ENCODE measurements at regions of chr5 and their contacts with region 1.

Region 1: GRCh38 chr5:611721-612486 is at the start of gene CEP72:
- DNase-seq: peak; percentile 93 to 99 (median 98)
- ATAC-seq: peak; percentile 93
- H3K4me3 ChIP-seq: peak within 1 kb of the TSS; percentile 87
- H3K27ac ChIP-seq: peak within 1 kb of the TSS; percentile 76
- H3K4me1 ChIP-seq: peaks cover 14 to 36% of the 10 kb centered on the region in 2 experiments
- H3K27me3 ChIP-seq: peaks cover 11 to 23% of the 10 kb centered on the region in 2 experiments; a peak in 4 of 5 replicates
- CTCF ChIP-seq: no peak
- EP300 ChIP-seq: no peak
- POLR2A ChIP-seq: peak; percentile 58; the same call in 1 of the 2 replicates
- RAD21 ChIP-seq: no peak
- polyA plus RNA-seq, gene CEP72: 0.89 to 1.4 TPM

Region 2: DNA sequence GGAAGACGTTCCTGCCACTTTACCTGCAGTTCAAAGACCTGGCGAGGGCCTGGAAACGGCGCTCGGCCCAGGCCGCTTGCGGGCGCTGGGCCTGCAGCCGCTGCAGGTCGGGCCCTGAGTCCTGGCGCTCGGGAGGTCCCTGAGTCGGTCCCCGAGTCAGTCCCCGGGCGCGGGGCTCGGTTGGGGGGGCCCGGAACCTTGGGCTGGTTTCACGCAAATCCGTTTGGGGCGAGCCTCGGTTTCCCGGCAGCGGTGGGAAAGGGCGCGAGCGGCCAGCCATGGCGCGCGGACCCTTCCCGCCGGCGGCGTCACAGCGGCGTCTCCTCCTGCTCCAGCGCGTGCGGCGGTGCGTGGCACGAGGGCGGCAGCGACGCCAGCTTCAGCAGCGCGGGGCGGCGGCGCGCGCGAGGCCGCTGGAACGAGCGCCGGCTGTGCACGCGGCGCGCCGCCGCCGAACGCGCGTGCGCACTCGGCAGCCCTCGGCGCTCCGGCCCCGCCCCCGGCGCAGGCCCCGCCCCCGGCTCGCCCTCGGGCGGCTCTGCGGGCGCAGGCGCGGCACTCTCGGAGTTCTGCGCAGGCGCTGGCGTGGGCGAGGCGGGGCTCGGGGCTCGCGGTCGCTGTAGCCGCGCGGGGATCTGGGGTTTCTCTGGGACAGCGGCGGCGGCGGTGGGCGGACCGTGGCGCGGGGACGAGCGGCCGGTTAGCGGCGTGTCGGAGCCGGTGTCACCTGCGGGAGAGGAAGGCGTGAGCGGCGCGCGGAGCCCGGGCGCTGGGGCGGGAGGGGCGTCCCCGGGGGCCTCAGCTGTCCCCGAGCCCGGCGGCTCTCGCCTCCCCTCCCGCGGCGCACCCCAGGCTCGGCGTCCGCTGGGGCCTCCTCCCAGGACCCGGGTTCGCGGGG is 139.0 kb before region 1 on chr5:
- CTCF ChIA-PET with region 1: no interaction called
- POLR2A ChIA-PET with region 1: interaction called, 4 read pairs
- in situ Hi-C with region 1: no loop called
- intact Hi-C with region 1: loop called (anchors 10 kb)
- DNase-seq: peak; percentile 91 to 100 (median 100)
- ATAC-seq: peak; percentile 84
- H3K4me3 ChIP-seq: peak overlapping the region; percentile 89
- H3K27ac ChIP-seq: peak overlapping the region; percentile 91
- H3K4me1 ChIP-seq: peaks cover 9 to 77% of the 10 kb centered on the region in 2 experiments; a peak in 4 of 5 replicates
- H3K27me3 ChIP-seq: peaks cover 6 to 32% of the 10 kb centered on the region in 2 experiments; a peak in 3 of 5 replicates
- CTCF ChIP-seq: no peak
- EP300 ChIP-seq: no peak
- POLR2A ChIP-seq: peak; percentile 68; the same call in 1 of the 2 replicates
- RAD21 ChIP-seq: no peak; a peak in 1 of 4 replicates

Region 3: DNA sequence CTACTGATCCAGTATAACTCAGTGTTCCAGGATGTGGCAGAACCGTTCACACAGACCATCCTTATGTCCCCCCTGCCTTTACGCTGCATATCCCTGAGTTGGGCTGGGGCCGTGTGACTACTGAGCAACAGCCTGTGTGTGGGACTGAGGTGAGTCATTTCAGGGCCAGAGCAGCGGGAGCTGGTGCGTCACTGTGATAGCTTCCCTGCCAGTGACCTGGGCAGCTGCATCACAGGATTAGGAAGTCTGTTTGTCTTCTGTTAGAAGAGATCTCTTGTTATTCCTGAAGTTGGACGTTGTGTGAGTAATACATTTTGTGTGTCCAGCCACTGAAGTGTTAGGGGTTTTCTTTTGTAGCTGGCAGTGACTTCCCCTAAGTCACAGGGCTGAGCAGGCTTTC is 45.7 kb after region 1 on chr5:
- CTCF ChIA-PET with region 1: no interaction called
- POLR2A ChIA-PET with region 1: no interaction called
- in situ Hi-C with region 1: loop called (anchors 5 kb)
- intact Hi-C with region 1: no loop called
- DNase-seq: peak; percentile 86 to 91 (median 88)
- ATAC-seq: peak; percentile 92
- H3K4me3 ChIP-seq: no peak overlapping the region
- H3K27ac ChIP-seq: peak overlapping the region; percentile 90
- H3K4me1 ChIP-seq: peaks cover 12 to 13% of the 10 kb centered on the region in 2 experiments; a peak in 4 of 5 replicates
- H3K27me3 ChIP-seq: no peaks in the 10 kb centered on the region
- CTCF ChIP-seq: no peak
- EP300 ChIP-seq: peak; percentile 88; the same call in 1 of the 2 replicates
- POLR2A ChIP-seq: no peak
- RAD21 ChIP-seq: no peak

Region 4: DNA sequence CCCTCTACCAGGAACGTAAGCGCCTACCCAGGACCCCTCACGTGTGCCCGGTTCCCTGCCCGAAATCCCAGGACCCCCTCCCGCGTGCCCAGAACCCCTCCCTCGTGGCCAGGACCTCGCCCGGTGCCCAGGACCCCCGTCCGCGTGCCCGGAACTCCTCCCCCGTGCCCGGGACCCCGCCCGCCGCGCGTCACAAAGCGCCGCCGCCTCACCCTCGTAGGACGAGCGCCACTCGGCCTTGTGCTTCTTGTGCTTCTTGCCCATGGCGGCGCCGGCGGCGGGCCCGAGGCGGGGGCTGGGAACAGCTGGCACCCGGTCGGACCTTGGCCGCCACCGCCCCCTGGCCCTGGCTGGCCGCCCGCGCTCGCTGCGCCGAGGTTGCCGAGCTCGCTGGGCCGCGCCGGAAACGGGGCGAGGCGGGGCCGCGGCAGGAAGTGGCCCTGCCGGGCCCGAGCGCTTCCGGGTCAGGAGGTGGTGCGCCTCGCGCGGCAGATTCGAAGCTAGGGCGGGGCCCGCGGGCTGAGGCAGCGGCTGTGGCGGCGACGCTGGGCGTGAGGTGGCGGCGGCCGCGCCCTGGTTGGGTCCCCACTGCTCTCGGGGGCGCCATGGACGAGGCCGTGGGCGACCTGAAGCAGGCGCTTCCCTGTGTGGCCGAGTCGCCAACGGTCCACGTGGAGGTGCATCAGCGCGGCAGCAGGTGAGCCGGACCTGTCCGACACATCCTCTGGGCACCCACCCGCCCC is 280.7 kb after region 1 on chr5 and contains the starts of genes BRD9 and TRIP13:
- CTCF ChIA-PET with region 1: no interaction called
- POLR2A ChIA-PET with region 1: no interaction called
- in situ Hi-C with region 1: no loop called
- intact Hi-C with region 1: loop called (anchors 5 kb)
- DNase-seq: peak; percentile 93 to 97 (median 96)
- ATAC-seq: peak; percentile 91
- H3K4me3 ChIP-seq: peak within 1 kb of the TSS; percentile 71
- H3K27ac ChIP-seq: peak within 1 kb of the TSS; percentile 83
- H3K4me1 ChIP-seq: peaks cover 20 to 37% of the 10 kb centered on the region in 2 experiments; a peak in 4 of 5 replicates
- H3K27me3 ChIP-seq: no peaks in the 10 kb centered on the region
- CTCF ChIP-seq: peak in 1 of 3 experiments; percentile 20; a peak in 2 of 6 replicates
- EP300 ChIP-seq: 0 out of 2 replicates have a peak, but pooled peaks have one; percentile 13
- POLR2A ChIP-seq: peak; percentile 72
- RAD21 ChIP-seq: no peak
- polyA plus RNA-seq, gene BRD9: 2.4 to 3.7 TPM
- polyA plus RNA-seq, gene TRIP13: 24.1 to 28.9 TPM

Region 5: DNA sequence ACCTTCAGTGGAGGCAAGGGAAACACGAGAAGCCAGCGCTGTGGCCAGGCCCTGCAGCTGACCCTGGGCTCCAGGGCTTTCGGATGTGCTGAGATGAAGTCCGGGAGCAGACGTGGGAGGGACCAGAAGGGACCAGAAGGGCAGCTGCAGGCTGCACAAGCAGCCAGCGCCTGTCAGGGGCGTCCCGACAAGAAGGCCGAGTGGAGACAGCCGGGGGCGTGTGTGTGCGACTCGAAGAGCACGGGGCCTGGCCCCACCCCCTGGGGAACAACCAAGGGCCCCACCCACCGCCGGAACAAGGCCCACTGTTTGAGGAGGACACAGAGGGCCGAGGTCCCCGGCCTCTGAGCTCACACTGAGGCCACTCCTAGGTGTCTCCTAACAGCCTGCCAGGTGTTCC is 468.5 kb after region 1 on chr5:
- CTCF ChIA-PET with region 1: no interaction called
- POLR2A ChIA-PET with region 1: no interaction called
- in situ Hi-C with region 1: no loop called
- intact Hi-C with region 1: no loop called
- DNase-seq: peak in 2 of 4 experiments; percentile 61 to 68
- ATAC-seq: peak; percentile 57
- H3K4me3 ChIP-seq: no peak overlapping the region
- H3K27ac ChIP-seq: no peak overlapping the region
- H3K4me1 ChIP-seq: peaks cover 0 to 59% of the 10 kb centered on the region in 2 experiments; a peak in 2 of 5 replicates
- H3K27me3 ChIP-seq: peaks cover 3 to 65% of the 10 kb centered on the region in 2 experiments; a peak in 3 of 5 replicates
- CTCF ChIP-seq: no peak
- EP300 ChIP-seq: no peak
- POLR2A ChIP-seq: no peak
- RAD21 ChIP-seq: no peak

Measured in K562 (cell line).